ENCODE measurements at regions of chr20 and their contacts with region 1.

Region 1: DNA sequence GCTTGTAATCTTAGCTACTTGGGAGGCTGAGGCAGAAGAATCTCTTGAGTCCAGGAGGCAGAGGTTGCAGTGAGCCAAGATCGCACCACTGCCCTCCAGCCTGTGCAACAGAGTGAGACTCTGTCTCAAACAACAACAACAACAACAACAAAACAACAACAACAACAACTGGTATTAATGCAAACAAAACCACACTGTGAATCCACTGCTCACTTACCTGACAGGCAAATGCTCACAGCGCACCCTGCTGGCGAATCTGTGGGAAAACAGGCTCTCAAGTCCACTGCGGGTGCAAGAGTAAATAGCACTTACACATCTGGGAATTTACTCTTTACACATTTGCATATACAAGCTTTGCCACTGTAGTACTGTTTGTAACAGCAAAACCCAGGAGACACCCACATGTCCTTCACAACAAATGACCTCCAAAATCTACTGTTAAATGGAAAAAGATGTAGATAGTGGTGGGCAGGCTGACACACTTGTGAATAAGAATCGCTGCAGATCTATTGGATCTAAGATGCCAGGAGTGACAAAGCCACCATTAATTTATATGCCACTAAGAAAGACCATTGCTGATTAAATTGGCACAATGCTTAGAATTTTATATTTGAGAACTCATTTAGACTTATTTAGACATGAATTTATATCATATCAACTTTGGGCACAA is 29.3 kb downstream of the NSFL1C start:
- DNase-seq: peak; percentile 86
- ATAC-seq: peak; percentile 69
- H3K4me3 ChIP-seq: no peak overlapping the region
- H3K27ac ChIP-seq: no peak overlapping the region
- H3K4me1 ChIP-seq: peaks cover 12% of the 10 kb centered on the region
- H3K27me3 ChIP-seq: no peaks in the 10 kb centered on the region
- CTCF ChIP-seq: peak; percentile 96

Region 2: DNA sequence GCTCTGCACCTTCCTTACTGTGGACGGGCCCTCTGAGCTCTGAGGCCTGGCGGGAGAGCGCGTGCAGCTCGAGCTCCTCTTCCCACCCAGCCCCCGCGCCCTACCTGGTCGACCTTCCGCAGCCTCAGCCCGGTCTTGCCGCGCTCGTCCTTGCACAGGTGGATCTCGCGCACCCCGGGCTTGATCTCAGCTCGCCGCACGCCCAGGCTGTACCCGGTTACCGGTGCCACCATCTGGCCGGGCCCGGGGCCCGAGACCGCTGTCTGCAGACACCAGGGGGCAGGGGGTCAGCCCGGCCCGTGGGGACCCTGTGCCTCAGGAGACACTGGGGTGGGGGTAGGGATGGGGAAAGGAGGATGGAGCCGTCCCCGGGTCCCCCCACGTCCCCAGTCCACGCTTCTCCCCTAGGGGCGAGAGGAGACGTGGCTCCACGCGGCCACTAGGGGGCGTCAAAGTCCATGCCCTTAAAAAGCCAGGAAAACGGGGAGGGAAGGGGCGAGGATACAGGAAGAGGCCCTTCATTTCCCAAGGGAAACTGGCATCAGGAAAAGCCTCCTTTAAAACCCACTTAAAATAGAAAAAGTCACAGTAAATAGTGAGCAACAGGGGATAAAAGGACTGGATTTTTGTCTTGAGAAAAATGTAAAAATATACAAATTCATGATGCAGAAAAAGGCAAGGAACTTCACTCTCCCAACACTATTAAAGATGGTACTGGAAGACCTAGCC is 124.0 kb before region 1 on chr20:
- CTCF ChIA-PET with region 1: no interaction called
- POLR2A ChIA-PET with region 1: no interaction called
- intact Hi-C with region 1: loop called (anchors 1 kb)
- DNase-seq: peak; percentile 83
- ATAC-seq: peak; percentile 86
- H3K4me3 ChIP-seq: no peak overlapping the region
- H3K27ac ChIP-seq: no peak overlapping the region
- H3K4me1 ChIP-seq: peaks cover 5% of the 10 kb centered on the region
- H3K27me3 ChIP-seq: no peaks in the 10 kb centered on the region
- CTCF ChIP-seq: peak; percentile 99

Region 3: DNA sequence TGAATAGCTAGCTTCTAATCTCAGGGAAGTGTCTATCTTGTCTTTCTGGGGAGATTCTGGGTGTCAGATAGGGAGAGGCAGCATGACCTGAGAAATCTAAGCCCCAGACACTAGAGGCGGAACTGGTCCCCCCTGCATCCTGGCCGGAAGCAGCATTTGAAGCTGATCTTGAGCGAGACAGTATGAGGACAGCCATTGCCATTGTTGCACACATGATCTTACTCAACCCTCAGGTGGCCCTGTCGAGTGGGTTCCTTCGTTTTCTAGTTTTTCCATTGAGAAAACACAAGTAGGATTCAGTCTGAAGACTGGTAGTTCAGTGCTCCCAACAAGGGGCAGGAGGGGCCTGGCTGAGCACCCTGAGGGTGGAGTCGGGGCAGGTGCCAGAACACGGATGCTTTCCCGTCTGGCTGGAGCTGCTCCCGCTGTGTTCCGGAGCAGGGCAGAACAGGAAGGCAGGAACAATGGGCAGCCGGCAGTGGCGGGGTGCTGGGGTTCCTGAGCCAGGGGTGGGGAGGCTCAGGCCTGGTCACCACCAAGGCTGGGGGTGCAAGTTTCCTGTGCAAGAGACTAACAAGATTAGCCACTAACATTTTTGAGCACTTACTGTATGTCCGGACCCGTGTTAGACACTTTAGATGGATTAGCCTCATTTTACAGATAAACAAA is 100.5 kb before region 1 on chr20:
- CTCF ChIA-PET with region 1: interaction called, 12 read pairs
- POLR2A ChIA-PET with region 1: no interaction called
- intact Hi-C with region 1: no loop called
- DNase-seq: no peak
- ATAC-seq: peak; percentile 54
- H3K4me3 ChIP-seq: no peak overlapping the region
- H3K27ac ChIP-seq: no peak overlapping the region
- H3K4me1 ChIP-seq: peaks cover 16% of the 10 kb centered on the region
- H3K27me3 ChIP-seq: no peaks in the 10 kb centered on the region
- CTCF ChIP-seq: no peak

Region 4: GRCh38 chr20:1392823-1393506 is 44.4 kb before region 1 on chr20 and contains the start of gene FKBP1A:
- CTCF ChIA-PET with region 1: interaction called, 3 read pairs
- POLR2A ChIA-PET with region 1: interaction called, 20 read pairs
- intact Hi-C with region 1: no loop called
- DNase-seq: peak; percentile 99
- ATAC-seq: peak; percentile 78
- H3K4me3 ChIP-seq: peak within 1 kb of the TSS; percentile 79
- H3K27ac ChIP-seq: peak within 1 kb of the TSS; percentile 43
- H3K4me1 ChIP-seq: peaks cover 66% of the 10 kb centered on the region
- H3K27me3 ChIP-seq: no peaks in the 10 kb centered on the region
- CTCF ChIP-seq: no peak
- total RNA-seq, gene FKBP1A: 178 and 198 TPM in 2 replicates

Region 5: DNA sequence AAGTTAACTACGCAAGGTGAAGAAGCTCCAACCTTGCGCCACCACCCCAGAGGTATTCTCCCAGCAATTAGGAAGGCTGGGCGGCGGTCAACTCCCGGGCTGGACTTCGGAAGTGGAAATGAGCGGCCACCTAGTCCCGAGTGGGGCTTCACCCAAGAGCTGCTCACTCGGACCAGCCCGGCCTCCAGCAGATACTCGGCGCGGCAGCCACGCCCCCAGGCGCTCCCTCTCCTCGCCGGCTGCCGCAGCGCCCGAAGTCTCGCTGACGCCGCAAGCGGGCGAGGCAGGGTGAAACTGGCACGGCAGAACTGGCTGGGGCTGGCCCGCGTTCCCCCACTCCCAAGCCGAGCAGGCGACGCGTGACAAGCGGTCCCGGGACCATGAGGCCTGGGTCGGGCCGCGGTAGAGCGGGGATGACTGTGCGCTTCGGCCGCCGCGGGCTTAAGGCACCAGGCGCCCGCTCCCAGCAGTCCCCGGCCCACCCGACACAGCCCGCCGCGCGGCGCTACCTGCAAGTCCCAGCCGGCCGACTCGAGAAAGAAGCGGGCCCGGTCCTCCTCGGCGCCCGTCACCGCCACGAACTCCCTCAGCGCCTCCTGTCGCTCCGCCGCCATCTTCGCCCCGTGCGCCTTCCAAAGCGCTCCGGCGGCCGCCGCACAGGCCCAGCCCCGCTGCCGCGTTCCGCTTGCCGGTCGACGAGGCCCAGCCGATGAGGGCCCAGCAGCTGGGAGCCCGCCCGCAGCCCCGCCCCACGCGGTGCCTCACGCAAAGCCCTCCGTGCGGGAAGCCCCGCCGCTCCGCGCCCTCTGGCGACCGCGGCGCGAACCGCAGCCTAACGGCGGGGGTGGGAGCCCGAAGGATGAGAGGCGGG is 29.1 kb after region 1 on chr20 and contains the start of gene NSFL1C:
- CTCF ChIA-PET with region 1: no interaction called
- POLR2A ChIA-PET with region 1: interaction called, 3 read pairs
- intact Hi-C with region 1: loop called (anchors 1 kb)
- DNase-seq: peak; percentile 99
- ATAC-seq: peak; percentile 77
- H3K4me3 ChIP-seq: peak within 1 kb of the TSS; percentile 77
- H3K27ac ChIP-seq: peak within 1 kb of the TSS; percentile 85
- H3K4me1 ChIP-seq: peaks cover 49% of the 10 kb centered on the region
- H3K27me3 ChIP-seq: no peaks in the 10 kb centered on the region
- CTCF ChIP-seq: peak; percentile 91
- total RNA-seq, gene NSFL1C: 170 and 217 TPM in 2 replicates

Region 6: DNA sequence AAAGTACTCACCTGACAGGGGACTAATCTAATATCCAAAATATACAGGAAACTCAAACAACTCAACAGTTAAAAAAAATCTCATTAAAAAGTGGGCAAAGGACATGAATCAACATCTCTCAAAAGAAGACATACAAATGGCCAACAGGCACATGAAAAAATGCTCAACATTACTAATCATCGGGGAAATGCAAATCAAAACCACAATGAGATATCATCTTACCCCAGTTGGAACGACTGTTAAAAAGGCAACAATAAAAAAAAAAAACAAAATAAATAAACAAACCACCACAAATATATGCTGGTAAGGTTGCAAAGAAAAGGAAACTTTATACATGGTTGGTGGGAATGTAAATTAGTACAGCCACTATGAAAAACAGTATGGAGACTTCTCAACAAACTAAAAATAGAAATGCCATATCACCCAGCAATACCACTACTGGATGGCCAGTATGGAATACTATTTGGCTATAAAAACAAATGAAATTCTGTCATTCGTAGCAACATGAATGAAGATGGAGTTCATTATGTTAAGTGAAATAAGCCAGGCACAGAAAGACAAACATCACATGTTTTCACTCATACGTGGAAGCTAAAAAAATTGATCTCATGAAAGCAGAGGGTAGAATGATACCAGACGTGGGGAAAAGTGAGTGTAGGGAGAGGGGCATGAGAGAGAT is 47.2 kb after region 1 on chr20:
- CTCF ChIA-PET with region 1: no interaction called
- POLR2A ChIA-PET with region 1: no interaction called
- intact Hi-C with region 1: no loop called
- DNase-seq: peak; percentile 87
- ATAC-seq: peak; percentile 88
- H3K4me3 ChIP-seq: no peak overlapping the region
- H3K27ac ChIP-seq: peak overlapping the region; percentile 39
- H3K4me1 ChIP-seq: peaks cover 33% of the 10 kb centered on the region
- H3K27me3 ChIP-seq: no peaks in the 10 kb centered on the region
- CTCF ChIP-seq: no peak